ENCODE measurements at regions of chr2 and their contacts with region 1.

Region 1: GRCh38 chr2:38465789-38466127 is 88.7 kb upstream of the ATL2 start:
- DNase-seq: peak; percentile 48 to 56
- H3K4me3 ChIP-seq: no peak overlapping the region
- H3K27ac ChIP-seq: peak overlapping the region; percentile 83 to 86 (median 84)
- H3K4me1 ChIP-seq: peaks cover 23 to 58% of the 10 kb centered on the region in 2 donors
- H3K27me3 ChIP-seq: no peaks in the 10 kb centered on the region
- CTCF ChIP-seq: peak in 3 of 6 experiments; percentile 39 to 46 (median 43)
- POLR2A ChIP-seq: no peak

Region 2: GRCh38 chr2:38377050-38377828 is 88.5 kb before region 1 on chr2 and contains the start of gene ATL2:
- intact Hi-C with region 1: loop called (anchors 10 kb)
- DNase-seq: peak; percentile 96 to 97
- H3K4me3 ChIP-seq: peak within 1 kb of the TSS; percentile 74 to 91 (median 84)
- H3K27ac ChIP-seq: peak within 1 kb of the TSS; percentile 97 to 99 (median 98)
- H3K4me1 ChIP-seq: peaks cover 14 to 31% of the 10 kb centered on the region in 2 donors
- H3K27me3 ChIP-seq: no peaks in the 10 kb centered on the region
- CTCF ChIP-seq: no peak
- POLR2A ChIP-seq: peak; percentile 84 to 96
- total RNA-seq, gene ATL2: 126 to 267 (median 146) TPM